Activated CD4-positive, alpha-beta memory T cell treated with anti-CD3 and anti-CD28 coated beads for 36 hours (primary cell): ENCODE measurements at regions of chr20 and their contacts with region 1.

Region 1: GRCh38 chr20:36645998-36646397 is at the start of gene SLA2:
- DNase-seq: peak; percentile 81
- H3K4me3 Mint-ChIP-seq: peak within 1 kb of the TSS; percentile 97
- H3K27ac Mint-ChIP-seq: peak within 1 kb of the TSS; percentile 100
- H3K4me1 Mint-ChIP-seq: peaks cover 47% of the 10 kb centered on the region
- H3K27me3 Mint-ChIP-seq: no peaks in the 10 kb centered on the region
- total RNA-seq, gene SLA2: 47.1 to 47.7 TPM

Region 2: DNA sequence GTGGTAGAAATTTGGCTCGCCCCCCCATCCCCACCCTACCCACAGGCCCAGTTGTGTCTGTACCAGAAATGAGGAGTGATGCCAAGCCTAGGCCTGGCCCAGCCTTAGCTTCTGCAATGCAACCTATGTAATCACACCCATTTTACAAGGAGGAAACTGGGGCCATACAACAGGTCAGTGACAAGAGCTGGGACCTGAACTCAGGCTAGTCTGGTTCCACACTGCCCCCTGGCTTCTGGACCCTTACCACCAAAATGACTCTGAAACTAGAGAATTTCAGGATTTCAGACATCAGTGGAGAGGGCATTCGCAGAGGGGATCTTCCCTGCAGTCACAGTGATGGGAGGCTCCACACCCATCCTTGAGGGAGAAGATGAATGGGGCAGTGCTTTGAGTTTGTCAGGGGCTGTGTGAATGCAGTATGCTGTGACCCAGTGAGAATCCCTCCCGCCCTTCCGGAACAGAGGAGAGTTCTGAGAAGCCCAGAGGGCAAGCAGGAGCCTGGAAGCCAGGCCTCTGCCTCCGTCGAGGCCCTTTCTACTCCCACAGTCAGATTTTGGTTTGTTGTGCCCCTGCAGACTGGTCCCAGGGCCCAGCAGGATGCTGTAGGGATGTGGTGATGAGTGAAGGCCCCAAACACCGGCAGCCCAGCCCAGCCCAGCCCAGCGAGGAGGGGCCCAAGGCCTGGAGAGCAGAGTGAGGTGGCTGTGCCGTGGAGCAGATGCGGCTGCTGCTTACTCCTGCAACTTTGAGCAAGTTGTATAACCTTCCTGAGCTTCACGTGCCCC is 152.8 kb before region 1 on chr20:
- CTCF ChIA-PET with region 1: no interaction called
- POLR2A ChIA-PET with region 1: no interaction called
- intact Hi-C with region 1: no loop called
- DNase-seq: peak; percentile 55
- H3K4me3 Mint-ChIP-seq: no peak overlapping the region
- H3K27ac Mint-ChIP-seq: no peak overlapping the region
- H3K4me1 Mint-ChIP-seq: peaks cover 35% of the 10 kb centered on the region
- H3K27me3 Mint-ChIP-seq: no peaks in the 10 kb centered on the region

Region 3: GRCh38 chr20:36573103-36573794 is 72.7 kb before region 1 on chr20 and contains the start of gene TGIF2:
- CTCF ChIA-PET with region 1: interaction called, 4 read pairs
- POLR2A ChIA-PET with region 1: interaction called, 15 read pairs
- intact Hi-C with region 1: loop called (anchors 1 kb)
- DNase-seq: peak; percentile 94
- H3K4me3 Mint-ChIP-seq: peak within 1 kb of the TSS; percentile 87
- H3K27ac Mint-ChIP-seq: peak within 1 kb of the TSS; percentile 92
- H3K4me1 Mint-ChIP-seq: peaks cover 33% of the 10 kb centered on the region
- H3K27me3 Mint-ChIP-seq: no peaks in the 10 kb centered on the region
- total RNA-seq, gene TGIF2: 39.7 to 43.0 TPM

Region 4: DNA sequence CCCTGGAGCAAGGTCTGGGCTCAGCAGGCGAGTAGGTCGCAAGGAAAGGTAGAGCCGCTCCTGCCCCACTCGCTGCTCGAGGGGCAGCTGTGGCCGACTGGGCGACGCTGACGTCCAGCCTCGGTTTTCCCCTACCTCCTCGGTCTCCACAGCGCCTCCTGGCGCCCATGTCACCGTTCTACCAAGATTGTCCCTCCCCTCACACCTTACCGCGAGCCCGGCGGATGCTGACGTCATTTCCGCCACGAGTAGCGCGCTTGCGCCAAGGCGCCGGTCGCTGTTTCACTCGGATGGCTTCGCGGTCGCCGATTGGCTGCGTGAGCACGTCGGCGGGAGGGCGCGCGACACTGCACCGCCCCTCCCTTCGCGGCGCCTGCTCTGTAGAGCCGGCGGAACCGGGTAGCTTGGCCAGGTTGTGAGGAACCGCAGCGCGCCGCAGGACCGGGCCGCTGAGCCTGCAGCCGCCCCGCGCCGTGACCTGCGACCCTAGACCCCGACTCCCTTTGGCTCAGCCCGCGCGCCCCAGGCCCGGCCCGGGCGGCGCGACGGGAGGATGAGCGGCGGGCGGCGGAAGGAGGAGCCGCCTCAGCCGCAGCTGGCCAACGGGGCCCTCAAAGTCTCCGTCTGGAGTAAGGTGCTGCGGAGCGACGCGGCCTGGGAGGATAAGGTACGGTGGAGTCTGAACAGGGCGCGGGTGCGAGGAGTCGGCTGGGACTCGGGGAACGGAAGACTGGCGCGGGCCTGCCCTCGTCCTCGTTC is 40.4 kb before region 1 on chr20 and contains the start of gene RAB5IF:
- CTCF ChIA-PET with region 1: interaction called, 8 read pairs
- POLR2A ChIA-PET with region 1: interaction called, 13 read pairs
- intact Hi-C with region 1: no loop called
- DNase-seq: peak; percentile 100
- H3K4me3 Mint-ChIP-seq: peak within 1 kb of the TSS; percentile 99
- H3K27ac Mint-ChIP-seq: peak within 1 kb of the TSS; percentile 97
- H3K4me1 Mint-ChIP-seq: peaks cover 28% of the 10 kb centered on the region
- H3K27me3 Mint-ChIP-seq: no peaks in the 10 kb centered on the region
- total RNA-seq, gene RAB5IF: 113 to 114 TPM

Region 5: GRCh38 chr20:36613974-36614373 is 32.0 kb before region 1 on chr20:
- CTCF ChIA-PET with region 1: interaction called, 6 read pairs
- POLR2A ChIA-PET with region 1: interaction called, 3 read pairs
- intact Hi-C with region 1: loop called (anchors 2 kb)
- DNase-seq: no peak
- H3K4me3 Mint-ChIP-seq: no peak overlapping the region
- H3K27ac Mint-ChIP-seq: peak overlapping the region; percentile 28
- H3K4me1 Mint-ChIP-seq: peaks cover 12% of the 10 kb centered on the region
- H3K27me3 Mint-ChIP-seq: no peaks in the 10 kb centered on the region

Region 6: DNA sequence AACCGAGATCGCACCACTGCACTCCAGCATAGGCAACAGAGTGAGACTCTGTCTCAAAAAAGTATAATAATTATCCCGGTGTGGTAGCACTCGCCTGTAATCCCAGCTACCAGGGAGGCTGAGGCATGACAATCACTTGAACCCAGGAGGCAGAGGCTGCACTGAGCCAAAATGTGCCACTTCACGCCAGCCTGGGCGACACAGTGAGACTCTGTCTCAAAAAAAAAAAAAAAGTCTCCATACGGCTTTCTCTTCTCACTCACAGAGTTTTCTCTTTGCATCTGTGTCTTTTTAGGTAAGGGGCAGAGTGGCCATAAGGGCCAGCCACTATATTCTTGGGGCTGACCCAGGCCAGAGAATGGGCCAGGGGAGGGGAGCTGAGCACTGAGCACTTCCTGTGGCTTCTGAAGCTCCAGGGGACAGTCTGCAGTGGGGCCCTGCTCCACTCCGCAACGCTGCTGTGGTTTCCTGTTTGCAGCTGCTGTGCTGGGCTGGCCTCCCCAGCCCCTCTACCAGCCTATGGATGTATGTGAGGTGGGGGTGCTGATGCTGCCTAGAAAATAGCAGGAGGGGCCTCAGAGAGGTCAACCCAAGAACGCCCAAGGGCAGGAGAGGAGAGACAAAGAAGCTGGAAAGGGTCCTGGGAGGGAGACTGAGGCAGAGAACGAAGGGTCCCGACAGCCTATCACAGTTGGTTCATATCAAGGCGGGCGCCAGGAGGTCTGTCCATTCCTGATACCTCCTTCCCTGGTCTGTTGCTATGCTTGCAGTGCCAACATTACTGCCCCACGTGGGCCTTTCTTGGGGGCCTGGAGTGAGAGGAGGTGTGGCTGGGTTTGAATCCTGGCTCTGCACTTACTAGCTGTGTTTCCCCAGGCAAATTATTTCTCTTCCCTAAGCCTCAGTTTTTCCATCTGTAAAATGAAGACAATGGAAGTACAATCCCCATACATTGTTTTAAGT is 16.0 kb before region 1 on chr20:
- CTCF ChIA-PET with region 1: interaction called, 17 read pairs
- POLR2A ChIA-PET with region 1: interaction called, 6 read pairs
- intact Hi-C with region 1: loop called (anchors 2 kb)
- DNase-seq: peak; percentile 76
- H3K4me3 Mint-ChIP-seq: peak overlapping the region; percentile 50
- H3K27ac Mint-ChIP-seq: peak overlapping the region; percentile 88
- H3K4me1 Mint-ChIP-seq: peaks cover 31% of the 10 kb centered on the region
- H3K27me3 Mint-ChIP-seq: no peaks in the 10 kb centered on the region

Region 7: DNA sequence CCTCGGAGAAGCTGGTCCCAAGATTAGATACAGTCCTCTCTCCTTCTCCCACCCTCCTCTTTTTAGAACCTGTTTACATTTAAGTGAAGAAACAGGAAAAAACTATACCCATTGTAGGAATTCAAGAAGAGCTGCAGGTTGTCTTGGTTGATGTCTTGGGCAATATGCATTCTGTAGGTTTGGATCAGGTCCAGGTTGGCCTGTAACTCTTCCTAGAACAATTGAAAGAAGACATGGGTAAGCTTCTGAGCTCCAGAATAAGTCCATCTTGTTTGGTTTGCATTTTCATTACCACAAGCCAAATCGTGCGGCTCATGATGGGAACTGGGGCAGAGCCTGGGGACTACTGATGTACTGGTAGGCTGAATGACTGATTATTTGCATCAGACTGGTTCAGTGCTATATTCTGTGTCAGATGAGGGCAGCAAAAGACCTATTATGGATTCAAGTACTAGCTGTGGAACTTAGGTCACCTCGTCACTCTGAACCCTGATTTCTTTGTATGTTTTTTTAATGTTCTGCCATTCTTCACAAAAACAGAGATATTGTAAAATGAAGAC is 20.3 kb after region 1 on chr20:
- CTCF ChIA-PET with region 1: no interaction called
- POLR2A ChIA-PET with region 1: no interaction called
- intact Hi-C with region 1: no loop called
- DNase-seq: no peak
- H3K4me3 Mint-ChIP-seq: no peak overlapping the region
- H3K27ac Mint-ChIP-seq: no peak overlapping the region
- H3K4me1 Mint-ChIP-seq: no peaks in the 10 kb centered on the region
- H3K27me3 Mint-ChIP-seq: no peaks in the 10 kb centered on the region

Region 8: GRCh38 chr20:36728986-36729385 is 83.0 kb after region 1 on chr20:
- CTCF ChIA-PET with region 1: no interaction called
- POLR2A ChIA-PET with region 1: interaction called, 5 read pairs
- intact Hi-C with region 1: loop called (anchors 5 kb)
- DNase-seq: peak; percentile 26
- H3K4me3 Mint-ChIP-seq: no peak overlapping the region
- H3K27ac Mint-ChIP-seq: no peak overlapping the region
- H3K4me1 Mint-ChIP-seq: peaks cover 22% of the 10 kb centered on the region
- H3K27me3 Mint-ChIP-seq: no peaks in the 10 kb centered on the region

Region 9: DNA sequence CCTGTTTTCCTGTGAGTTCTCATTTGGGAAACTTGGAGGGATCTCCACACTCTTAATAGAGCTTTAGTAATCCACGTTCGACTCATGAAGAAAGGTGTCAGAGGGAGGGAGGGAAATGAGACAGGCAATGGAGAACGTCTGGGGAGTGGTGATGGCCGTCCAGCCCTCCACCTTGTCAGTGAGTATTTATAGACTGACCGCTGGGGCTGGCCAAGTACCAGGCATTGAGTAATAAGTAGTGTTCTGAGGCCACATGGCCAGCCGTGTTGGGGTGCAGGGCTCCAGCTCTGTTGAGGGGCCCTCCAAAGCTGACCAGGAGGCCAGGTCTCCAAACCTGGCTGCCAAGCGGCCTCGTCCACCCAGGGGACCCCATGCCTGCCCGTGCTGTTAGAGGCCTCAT is 138.9 kb after region 1 on chr20:
- CTCF ChIA-PET with region 1: no interaction called
- POLR2A ChIA-PET with region 1: no interaction called
- intact Hi-C with region 1: no loop called
- DNase-seq: no peak
- H3K4me3 Mint-ChIP-seq: no peak overlapping the region
- H3K27ac Mint-ChIP-seq: no peak overlapping the region
- H3K4me1 Mint-ChIP-seq: no peaks in the 10 kb centered on the region
- H3K27me3 Mint-ChIP-seq: no peaks in the 10 kb centered on the region